Colonic mucosa (tissue), 4 donors: ENCODE measurements at regions of chr7 and their contacts with region 1.

Region 1: GRCh38 chr7:129271500-129272355 is 46.9 kb downstream of the AHCYL2 start:
- DNase-seq: peak; percentile 73
- H3K4me3 ChIP-seq: no peak overlapping the region
- H3K27ac ChIP-seq: no peak overlapping the region
- H3K4me1 ChIP-seq: no peaks in the 10 kb centered on the region
- H3K27me3 ChIP-seq: no peaks in the 10 kb centered on the region
- CTCF ChIP-seq: peak; percentile 71

Region 2: DNA sequence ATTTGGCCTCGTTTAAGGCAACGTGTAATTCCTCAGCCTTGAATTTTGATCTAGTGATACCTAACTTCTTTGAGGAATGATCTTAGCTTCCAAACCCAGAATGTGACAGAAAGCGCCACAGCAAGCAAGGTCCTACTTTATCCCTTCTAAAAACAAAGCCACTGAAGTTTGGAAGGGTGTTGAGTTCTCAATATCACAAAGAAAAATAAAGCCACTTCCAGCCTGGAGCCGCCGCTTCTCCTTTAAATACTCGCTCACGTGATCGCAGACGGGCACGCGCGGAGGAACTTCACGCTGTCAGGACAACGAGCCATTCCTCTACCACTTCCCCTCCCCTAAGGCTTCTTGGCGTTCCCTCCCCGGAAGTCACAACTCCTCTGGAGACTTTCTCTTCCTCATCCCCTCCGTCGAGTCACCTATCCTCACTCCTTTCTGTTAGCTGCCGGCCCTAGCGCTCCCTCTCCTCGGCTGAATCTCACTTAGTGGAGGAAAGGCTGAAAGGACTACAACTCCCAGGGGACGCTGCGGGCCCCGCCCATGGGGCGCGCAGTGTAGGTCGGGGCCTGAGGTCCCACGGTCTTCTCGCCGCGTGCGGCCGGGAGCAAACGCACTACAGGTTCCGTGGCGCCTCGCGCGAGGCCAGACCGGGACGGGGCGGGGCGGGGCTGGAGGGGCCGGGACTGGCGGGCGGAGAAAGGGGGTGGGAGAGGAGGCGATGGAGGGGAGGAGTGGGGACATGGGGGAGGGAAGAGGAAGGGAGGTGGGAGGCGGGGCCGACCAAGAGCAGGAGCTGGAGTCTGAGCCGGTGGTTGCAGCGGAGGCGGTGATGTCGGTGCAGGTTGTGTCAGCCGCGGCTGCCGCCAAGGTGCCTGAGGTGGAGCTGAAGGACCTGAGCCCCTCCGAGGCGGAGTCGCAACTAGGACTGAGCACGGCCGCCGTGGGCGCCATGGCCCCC is 47.2 kb before region 1 on chr7 and contains the start of gene AHCYL2:
- intact Hi-C with region 1: loop called (anchors 5 kb)
- DNase-seq: peak; percentile 98
- H3K4me3 ChIP-seq: peak within 1 kb of the TSS; percentile 82
- H3K27ac ChIP-seq: peak within 1 kb of the TSS; percentile 92
- H3K4me1 ChIP-seq: no peaks in the 10 kb centered on the region
- H3K27me3 ChIP-seq: no peaks in the 10 kb centered on the region
- CTCF ChIP-seq: no peak
- total RNA-seq, gene AHCYL2: 262 to 397 TPM